T-cell (primary cell): ENCODE measurements at regions of chr1 and their contacts with region 1.

Region 1: DNA sequence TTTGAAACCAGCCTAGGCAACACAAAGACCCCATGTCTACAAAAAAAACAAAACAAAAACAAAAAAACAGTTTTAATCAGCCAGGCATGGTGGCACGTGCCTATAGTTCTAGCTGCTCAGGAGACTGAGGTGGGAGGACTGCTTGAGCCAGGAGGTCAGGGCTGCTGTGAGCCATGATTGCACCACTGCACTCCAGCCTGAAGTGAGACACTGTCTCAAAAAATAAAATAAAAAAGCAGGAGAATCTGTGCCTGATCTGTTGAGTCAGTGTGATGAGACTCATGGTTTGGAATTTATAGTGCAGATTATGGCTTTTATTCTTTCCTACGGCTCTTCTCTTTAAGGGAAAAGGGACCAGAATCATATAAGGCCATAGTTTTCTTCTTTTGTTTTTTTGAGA is 16.5 kb downstream of the TRIT1 start:
- DNase-seq: no peak
- ATAC-seq: no peak
- H3K4me3 ChIP-seq: no peak overlapping the region
- H3K4me3 Mint-ChIP-seq: no peak overlapping the region
- H3K27ac ChIP-seq: no peak overlapping the region
- H3K27ac Mint-ChIP-seq: no peak overlapping the region
- H3K4me1 ChIP-seq: no peaks in the 10 kb centered on the region
- H3K4me1 Mint-ChIP-seq: peaks cover 12 to 21% (median 21%) of the 10 kb centered on the region in 3 donors
- H3K27me3 ChIP-seq: no peaks in the 10 kb centered on the region
- H3K27me3 Mint-ChIP-seq: no peaks in the 10 kb centered on the region

Region 2: DNA sequence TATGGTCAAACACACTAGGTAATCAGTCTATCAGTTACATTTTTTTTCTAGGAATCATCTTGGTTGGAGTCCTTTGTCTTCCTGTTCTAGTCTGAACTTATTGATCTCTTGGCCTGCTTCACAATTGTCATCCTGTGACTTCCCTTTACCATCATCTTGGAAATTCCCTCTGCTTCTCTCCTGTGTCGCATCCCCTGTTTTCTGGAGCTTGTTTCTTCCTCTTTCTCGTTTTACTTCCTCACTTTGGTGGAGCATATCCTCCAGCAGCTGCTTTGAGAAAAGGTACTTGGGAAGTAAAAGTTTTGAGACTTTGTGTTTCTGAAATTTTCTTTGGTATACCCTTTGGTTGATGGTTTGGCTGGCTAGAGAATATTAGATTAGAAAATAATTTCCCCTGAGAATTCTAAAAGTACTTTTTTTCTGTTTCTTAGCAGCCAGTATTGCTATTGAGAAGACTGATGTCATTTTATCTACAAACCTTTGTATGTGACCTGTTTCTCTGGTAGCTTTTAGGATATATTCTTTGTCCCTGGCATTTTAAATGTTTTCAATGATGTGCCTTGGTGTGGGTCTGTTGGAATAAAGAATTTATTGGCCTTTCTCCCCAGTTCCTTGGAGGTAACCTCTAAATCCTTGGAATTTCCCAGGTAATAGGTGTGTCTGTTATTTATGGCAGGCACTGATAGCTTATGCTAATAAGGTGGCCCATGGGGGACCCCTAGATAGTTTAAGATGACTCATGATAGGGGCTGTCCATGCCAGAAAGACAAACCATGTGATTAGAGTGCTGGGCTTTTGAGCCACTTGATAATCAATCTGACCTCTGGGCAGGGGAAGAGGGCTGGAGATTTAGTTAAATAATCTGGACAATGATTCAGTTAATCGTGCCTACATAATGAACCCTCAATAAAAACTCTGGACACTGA is 41.0 kb after region 1 on chr1:
- CTCF ChIA-PET with region 1: interaction called in 1 of 2 experiments, 12 read pairs
- POLR2A ChIA-PET with region 1: no interaction called
- DNase-seq: no peak
- ATAC-seq: no peak
- H3K4me3 ChIP-seq: peak overlapping the region in 1 of 2 donors; percentile 21
- H3K4me3 Mint-ChIP-seq: no peak overlapping the region
- H3K27ac ChIP-seq: no peak overlapping the region
- H3K27ac Mint-ChIP-seq: no peak overlapping the region
- H3K4me1 ChIP-seq: no peaks in the 10 kb centered on the region
- H3K4me1 Mint-ChIP-seq: no peaks in the 10 kb centered on the region
- H3K27me3 ChIP-seq: peaks cover 6 to 33% of the 10 kb centered on the region in 2 experiments
- H3K27me3 Mint-ChIP-seq: peaks cover 37 to 61% of the 10 kb centered on the region in 2 donors

Region 3: GRCh38 chr1:40014812-40015594 is 148.2 kb after region 1 on chr1:
- CTCF ChIA-PET with region 1: no interaction called
- POLR2A ChIA-PET with region 1: no interaction called
- DNase-seq: no peak
- ATAC-seq: no peak
- H3K4me3 ChIP-seq: no peak overlapping the region
- H3K4me3 Mint-ChIP-seq: no peak overlapping the region
- H3K27ac ChIP-seq: no peak overlapping the region
- H3K27ac Mint-ChIP-seq: peak overlapping the region; percentile 36 to 48
- H3K4me1 ChIP-seq: peaks cover 7 to 10% of the 10 kb centered on the region in 2 experiments
- H3K4me1 Mint-ChIP-seq: peaks cover 14 to 23% (median 15%) of the 10 kb centered on the region in 3 donors
- H3K27me3 ChIP-seq: no peaks in the 10 kb centered on the region
- H3K27me3 Mint-ChIP-seq: no peaks in the 10 kb centered on the region